ENCODE measurements at regions of chr5 and their contacts with region 1.

Region 1: DNA sequence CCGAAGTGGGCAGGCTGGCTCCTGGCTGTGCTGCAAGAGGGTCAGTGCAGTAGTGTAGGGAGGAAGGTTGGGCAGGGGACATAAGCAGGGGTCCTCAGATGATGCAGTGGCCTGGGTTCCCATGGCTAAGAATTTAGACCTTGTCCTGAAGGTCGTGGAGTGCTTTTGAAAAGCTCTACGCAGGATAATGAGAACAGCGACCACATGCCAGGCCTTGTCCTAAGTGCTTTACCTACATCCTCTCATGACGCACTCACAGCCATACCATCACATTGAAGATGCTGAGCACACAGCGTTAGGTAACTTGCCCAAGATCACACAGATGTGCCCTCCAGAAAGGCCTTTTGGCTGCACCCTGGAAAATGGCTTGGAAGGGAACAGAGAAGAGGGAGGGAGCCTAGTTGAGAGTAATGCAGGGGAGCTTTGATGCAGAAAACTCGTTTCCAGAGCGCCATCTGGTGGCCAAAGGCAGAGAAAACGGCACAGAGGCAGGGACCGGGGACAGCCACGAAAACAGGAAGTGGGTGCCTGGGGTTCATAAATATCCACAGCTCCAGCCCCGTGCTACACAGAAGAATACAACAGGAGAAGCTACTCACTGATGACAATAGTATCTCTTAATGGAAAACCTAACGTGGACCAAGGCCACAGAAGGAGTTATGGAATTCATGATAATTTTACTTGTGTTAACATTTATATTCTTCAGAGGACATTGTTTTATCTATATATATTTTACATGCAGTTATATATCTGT is 2.6 kb upstream of the PCDH12 start:
- DNase-seq: peak; percentile 97
- H3K4me3 Mint-ChIP-seq: peak overlapping the region; percentile 69
- H3K27ac Mint-ChIP-seq: peak overlapping the region; percentile 90
- H3K4me1 Mint-ChIP-seq: peaks cover 39% of the 10 kb centered on the region
- H3K27me3 Mint-ChIP-seq: no peaks in the 10 kb centered on the region

Region 2: GRCh38 chr5:141633871-141634561 is 326.6 kb before region 1 on chr5:
- intact Hi-C with region 1: no loop called
- DNase-seq: no peak
- H3K4me3 Mint-ChIP-seq: peak overlapping the region; percentile 38
- H3K27ac Mint-ChIP-seq: peak overlapping the region; percentile 57
- H3K4me1 Mint-ChIP-seq: peaks cover 33% of the 10 kb centered on the region
- H3K27me3 Mint-ChIP-seq: no peaks in the 10 kb centered on the region

Region 3: DNA sequence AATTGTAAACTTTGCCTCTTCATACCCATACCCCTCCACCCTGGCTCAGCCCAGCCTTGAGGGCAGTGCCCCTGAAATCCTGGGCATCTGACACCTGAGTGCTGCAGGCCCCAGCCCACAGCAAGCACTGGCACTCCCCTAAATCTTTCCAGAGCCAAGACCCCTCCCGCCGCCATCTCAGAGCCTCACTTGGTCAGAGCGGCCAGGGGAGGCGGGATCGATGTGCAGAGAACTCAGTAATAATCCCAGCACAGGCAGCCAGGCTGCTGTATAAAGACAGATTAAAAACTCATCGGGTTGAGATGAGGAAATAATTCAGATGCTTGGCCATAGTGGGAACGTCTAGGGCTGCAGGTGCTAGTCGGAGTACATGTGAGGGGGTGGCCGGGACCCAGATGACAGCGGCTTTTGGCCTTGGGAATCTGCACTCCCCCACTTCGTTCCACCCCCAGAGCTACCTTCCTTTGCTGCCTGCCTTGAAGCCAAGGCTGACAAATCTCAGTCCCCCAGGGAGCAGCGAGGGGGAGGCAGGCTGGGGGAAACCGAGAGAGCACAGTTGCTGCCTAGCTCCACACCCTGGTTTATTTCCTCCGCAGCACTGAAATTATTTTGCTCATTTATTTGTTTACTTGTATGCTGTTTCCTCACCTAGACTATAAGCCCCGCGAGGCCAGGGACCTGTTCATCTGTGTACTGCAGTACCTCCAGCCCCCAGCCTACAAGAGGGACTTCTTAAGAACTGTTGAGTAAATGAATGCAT is 259.1 kb before region 1 on chr5:
- intact Hi-C with region 1: loop called (anchors 1 kb)
- DNase-seq: no peak
- H3K4me3 Mint-ChIP-seq: peak overlapping the region; percentile 82
- H3K27ac Mint-ChIP-seq: no peak overlapping the region
- H3K4me1 Mint-ChIP-seq: peaks cover 18% of the 10 kb centered on the region
- H3K27me3 Mint-ChIP-seq: peaks cover 47% of the 10 kb centered on the region

Region 4: GRCh38 chr5:141889282-141889871 is 71.2 kb before region 1 on chr5:
- intact Hi-C with region 1: loop called (anchors 1 kb)
- DNase-seq: no peak
- H3K4me3 Mint-ChIP-seq: no peak overlapping the region
- H3K27ac Mint-ChIP-seq: no peak overlapping the region
- H3K4me1 Mint-ChIP-seq: no peaks in the 10 kb centered on the region
- H3K27me3 Mint-ChIP-seq: peaks cover 34% of the 10 kb centered on the region

Region 5: DNA sequence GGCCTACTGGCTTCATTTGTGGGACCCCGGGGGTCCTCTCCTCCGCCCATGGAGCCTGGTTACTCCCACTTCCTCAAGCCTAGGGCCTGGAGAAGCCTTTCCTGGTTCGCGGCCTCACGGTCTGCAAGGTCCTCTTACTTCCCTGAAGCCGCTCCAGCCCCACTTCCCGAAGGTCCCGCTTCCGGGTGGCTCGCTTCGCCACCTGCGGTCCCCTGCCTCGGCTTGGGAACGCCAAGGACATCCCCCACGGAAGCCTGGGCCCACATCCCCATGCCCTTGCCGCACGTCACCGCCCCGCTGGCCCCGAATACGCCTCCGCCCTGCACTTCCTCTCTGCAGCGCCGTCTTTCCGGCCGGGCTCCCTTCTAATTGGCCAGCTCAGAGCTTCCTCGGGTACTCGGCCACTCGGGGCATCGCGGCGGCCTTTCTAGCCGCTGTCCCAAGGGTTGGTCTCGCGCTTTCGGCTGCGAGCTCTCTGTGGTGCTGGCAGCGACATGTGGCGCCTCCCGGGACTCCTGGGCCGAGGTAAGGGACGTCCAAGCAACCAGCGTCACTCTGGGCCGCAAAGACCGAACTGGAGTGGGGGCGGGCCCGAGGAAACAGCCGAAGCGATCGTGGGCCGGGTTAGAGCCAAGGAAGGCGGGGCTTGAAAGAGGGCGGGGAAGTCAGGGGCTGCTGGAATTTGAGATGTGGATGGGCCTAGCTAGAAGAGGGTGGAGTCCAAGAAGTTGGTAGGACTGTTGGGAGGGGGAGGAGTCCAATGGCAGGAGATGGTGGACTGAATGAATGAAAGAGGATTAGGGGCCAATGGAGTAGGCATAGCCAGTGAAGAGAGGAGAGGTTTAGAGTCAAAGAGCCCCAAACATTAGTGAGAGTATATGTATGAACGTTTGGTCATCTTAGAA is 36.9 kb before region 1 on chr5 and contains the start of gene DELE1:
- intact Hi-C with region 1: loop called (anchors 1 kb)
- DNase-seq: peak; percentile 97
- H3K4me3 Mint-ChIP-seq: peak within 1 kb of the TSS; percentile 86
- H3K27ac Mint-ChIP-seq: peak within 1 kb of the TSS; percentile 87
- H3K4me1 Mint-ChIP-seq: peaks cover 31% of the 10 kb centered on the region
- H3K27me3 Mint-ChIP-seq: no peaks in the 10 kb centered on the region
- total RNA-seq, gene DELE1: 66.7 and 72.0 TPM in 2 replicates